Right ventricle myocardium inferior (tissue), 1 donor: ENCODE measurements at regions of chr1 and their contacts with region 1.

Region 1: DNA sequence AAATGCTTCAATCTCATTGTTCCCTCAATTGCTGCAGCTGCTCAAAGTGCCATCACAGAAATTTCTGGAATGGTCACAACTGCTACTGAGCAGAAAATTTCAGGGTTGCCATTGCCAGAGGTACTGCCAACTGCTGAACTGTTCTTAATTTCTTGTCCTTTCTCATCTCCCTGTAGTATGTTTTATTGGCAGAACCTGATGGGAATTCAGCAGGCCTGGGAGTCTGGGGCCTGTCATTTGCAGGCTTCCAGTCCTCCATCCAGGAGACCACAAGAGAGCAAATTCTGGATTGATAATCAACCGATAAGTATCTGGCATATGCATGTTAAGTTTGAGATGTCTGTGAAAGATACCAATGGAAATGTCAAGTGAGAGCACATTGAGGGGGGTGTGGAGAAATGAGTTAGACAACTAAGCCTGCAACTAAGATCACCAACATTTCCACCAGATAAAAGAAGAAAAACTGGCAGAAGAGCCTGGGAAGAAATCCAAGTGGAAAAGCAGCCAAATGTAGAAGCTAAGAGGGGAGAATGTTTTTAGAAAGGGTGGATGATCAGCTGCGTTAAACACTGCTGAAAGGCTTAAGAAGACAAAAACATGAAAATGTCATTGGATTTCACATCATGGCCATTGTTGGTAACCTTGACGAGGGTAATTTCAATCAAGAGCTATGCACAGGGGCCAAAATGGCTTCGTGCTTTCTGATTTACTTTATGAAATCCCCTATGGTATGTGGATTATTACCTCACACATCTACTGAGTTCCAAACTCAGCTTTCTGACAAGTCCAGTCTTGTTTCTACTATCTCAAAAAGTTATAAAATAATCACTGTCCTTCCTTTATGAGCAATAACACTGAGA is 648.1 kb downstream of the PLPP3 start:
- DNase-seq: no peak
- ATAC-seq: peak; percentile 83

Region 2: DNA sequence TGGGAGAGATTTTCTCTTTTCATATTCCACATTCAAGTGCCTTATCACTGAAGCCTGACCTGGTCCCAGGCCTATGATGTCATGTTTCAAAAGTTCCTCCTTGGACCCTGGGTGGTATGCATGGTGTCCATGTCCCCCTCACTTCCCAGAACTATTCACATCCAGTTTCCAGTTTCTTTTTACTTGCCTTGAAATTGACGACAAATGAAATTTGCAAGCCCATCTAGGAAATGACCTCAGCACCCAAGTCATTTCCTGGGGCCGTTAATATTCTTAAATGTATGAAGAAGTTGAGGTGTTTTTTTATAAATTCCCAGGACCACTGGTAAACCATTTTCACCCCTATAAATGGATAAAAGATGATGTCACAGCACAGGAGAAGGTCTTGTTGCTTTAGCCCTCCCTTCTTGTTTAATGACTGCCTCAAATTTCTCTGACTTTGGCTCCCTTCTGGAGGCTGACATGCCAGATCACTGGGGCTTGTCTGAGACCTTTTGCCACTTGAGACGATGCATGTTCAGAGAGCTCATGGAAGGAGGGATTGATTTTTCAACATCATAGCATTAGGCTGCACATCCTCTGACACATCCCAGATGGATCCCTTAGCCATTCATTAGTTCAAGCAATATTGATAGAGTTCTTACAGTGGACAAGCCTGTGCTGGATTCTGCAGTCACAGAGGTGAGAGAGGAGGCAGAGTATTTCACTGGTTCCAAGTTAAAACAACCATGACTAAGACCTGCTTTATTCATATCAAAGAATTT is 426.8 kb after region 1 on chr1:
- intact Hi-C with region 1: loop called (anchors 10 kb)
- DNase-seq: no peak
- ATAC-seq: no peak